ENCODE measurements at regions of chr3 and their contacts with region 1.

Region 1: GRCh38 chr3:148943506-148944205 is 47.7 kb upstream of the GYG1 start:
- DNase-seq: no peak
- H3K4me3 ChIP-seq: no peak overlapping the region
- H3K27ac ChIP-seq: no peak overlapping the region
- H3K4me1 ChIP-seq: no peaks in the 10 kb centered on the region
- H3K27me3 ChIP-seq: no peaks in the 10 kb centered on the region
- CTCF ChIP-seq: peak; percentile 19 to 61 (median 58)
- POLR2A ChIP-seq: no peak

Region 2: GRCh38 chr3:147141516-147142288 is 1802.0 kb before region 1 on chr3:
- intact Hi-C with region 1: no loop called
- DNase-seq: no peak
- H3K4me3 ChIP-seq: no peak overlapping the region
- H3K27ac ChIP-seq: no peak overlapping the region
- H3K4me1 ChIP-seq: no peaks in the 10 kb centered on the region
- H3K27me3 ChIP-seq: no peaks in the 10 kb centered on the region
- CTCF ChIP-seq: no peak
- POLR2A ChIP-seq: no peak

Region 3: DNA sequence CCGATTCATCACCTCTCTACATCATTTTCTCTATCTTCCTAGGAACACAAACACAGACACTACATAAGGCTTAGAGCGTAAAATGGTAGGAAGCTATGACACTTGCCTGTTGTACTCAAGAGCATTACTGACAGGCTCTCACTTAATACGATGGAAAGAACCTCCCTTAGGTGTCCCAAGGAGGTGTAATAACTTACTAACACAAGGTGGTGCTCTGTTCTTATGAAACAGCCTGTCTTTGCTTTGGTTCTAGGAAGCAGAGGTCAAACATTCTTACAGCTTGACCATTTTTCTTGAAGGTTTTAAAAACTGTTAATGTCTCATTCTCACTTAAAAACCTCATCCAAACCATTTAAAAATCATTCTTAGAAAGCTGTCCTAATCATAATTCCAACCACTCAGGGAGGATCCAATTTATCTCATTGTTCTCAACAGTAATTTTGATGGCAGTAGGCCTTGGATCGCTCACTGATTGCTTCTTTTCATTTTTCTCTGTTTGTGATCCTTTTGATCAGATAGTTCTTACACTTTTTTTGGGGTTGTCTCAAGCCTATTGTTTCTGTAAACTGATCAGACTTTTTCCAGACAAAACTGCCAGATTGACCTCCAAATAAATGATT is 563.8 kb before region 1 on chr3:
- intact Hi-C with region 1: loop called (anchors 5 kb)
- DNase-seq: no peak
- H3K4me3 ChIP-seq: no peak overlapping the region
- H3K27ac ChIP-seq: no peak overlapping the region
- H3K4me1 ChIP-seq: no peaks in the 10 kb centered on the region
- H3K27me3 ChIP-seq: no peaks in the 10 kb centered on the region
- CTCF ChIP-seq: peak in 1 of 3 experiments; percentile 42
- POLR2A ChIP-seq: no peak

Region 4: GRCh38 chr3:148861277-148861869 is 82.3 kb before region 1 on chr3:
- intact Hi-C with region 1: loop called (anchors 10 kb)
- DNase-seq: no peak
- H3K4me3 ChIP-seq: no peak overlapping the region
- H3K27ac ChIP-seq: no peak overlapping the region
- H3K4me1 ChIP-seq: no peaks in the 10 kb centered on the region
- H3K27me3 ChIP-seq: no peaks in the 10 kb centered on the region
- CTCF ChIP-seq: peak; percentile 49 to 73 (median 64)
- POLR2A ChIP-seq: no peak